HepG2 (cell line): ENCODE measurements at regions of chr1 and their contacts with region 1.

Region 1: DNA sequence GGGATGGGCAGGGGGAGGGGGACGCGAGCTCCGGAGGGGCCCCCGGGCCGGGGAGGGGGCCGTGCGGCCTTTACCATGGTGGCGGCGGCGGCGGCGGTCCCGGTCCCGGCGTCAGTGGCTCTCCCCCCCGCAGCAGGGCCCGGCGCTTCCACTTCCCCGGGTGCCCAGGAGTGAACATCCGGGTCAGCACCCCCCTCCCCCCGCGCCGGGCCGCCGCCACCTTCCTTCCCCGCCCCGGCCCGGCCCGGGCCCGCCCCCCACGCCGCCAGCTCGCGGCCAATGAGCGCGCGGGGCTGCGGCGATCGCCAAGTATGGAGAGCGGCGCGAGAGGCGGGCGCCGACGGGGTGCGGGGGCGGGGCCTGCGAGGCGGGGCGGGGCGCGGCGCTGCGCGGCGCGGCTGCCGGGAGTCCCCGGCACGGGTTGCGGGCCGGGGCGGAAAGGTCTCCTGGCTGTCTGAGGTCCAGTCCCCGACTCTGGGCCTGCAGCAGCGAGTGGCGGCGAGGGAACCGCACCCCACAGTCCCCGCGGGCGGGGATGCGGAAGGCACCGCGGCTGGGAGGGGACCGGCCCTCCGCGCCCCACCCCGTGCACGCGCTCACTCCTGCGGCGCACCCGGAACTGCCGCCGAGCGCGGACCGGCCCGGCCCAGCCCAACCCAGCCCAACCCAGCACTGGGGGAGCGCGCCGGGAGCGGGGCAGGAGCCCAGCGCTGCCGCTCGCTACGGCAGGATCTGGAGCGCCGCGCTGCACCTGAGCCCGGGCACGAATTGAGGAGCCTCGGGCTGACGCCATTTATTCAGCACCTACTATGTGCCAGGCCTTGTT is at the start of gene CAPZB:
- DNase-seq: peak; percentile 75
- ATAC-seq: peak; percentile 76
- H3K4me3 ChIP-seq: peak within 1 kb of the TSS; percentile 84 to 100 (median 99)
- H3K27ac ChIP-seq: peak within 1 kb of the TSS; percentile 93
- H3K4me1 ChIP-seq: peaks cover 61% of the 10 kb centered on the region
- H3K27me3 ChIP-seq: no peaks in the 10 kb centered on the region; a peak in 1 of 5 replicates
- CTCF ChIP-seq: no peak
- EP300 ChIP-seq: no peak
- POLR2A ChIP-seq: peak; percentile 80 to 84
- RAD21 ChIP-seq: peak; percentile 70
- total RNA-seq, gene CAPZB: 58.9 and 84.1 TPM in 2 replicates

Region 2: DNA sequence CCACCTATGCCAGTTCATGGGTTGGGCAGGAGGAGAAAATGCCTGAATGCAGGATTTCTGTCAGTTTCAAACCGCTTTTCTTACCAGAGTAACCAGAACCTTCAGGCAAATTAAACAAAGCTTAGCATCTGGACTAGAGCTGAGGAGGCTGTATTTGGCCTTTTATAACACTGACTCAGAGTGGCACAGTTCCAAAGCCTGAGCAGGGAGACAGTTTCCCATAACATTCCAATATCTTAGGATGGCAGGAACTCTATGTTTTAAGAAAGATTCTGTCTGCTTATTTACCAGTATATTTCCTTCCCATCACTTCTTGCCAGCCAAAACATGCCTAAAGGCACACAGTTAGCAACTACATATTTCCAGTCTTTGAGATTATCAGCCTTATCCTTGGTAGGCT is 322.3 kb before region 1 on chr1:
- CTCF ChIA-PET with region 1: no interaction called
- POLR2A ChIA-PET with region 1: no interaction called
- in situ Hi-C with region 1: no loop called
- intact Hi-C with region 1: no loop called
- DNase-seq: no peak
- ATAC-seq: no peak
- H3K4me3 ChIP-seq: no peak overlapping the region
- H3K27ac ChIP-seq: no peak overlapping the region
- H3K4me1 ChIP-seq: no peaks in the 10 kb centered on the region
- H3K27me3 ChIP-seq: no peaks in the 10 kb centered on the region
- CTCF ChIP-seq: no peak
- EP300 ChIP-seq: no peak
- POLR2A ChIP-seq: no peak
- RAD21 ChIP-seq: no peak

Region 3: DNA sequence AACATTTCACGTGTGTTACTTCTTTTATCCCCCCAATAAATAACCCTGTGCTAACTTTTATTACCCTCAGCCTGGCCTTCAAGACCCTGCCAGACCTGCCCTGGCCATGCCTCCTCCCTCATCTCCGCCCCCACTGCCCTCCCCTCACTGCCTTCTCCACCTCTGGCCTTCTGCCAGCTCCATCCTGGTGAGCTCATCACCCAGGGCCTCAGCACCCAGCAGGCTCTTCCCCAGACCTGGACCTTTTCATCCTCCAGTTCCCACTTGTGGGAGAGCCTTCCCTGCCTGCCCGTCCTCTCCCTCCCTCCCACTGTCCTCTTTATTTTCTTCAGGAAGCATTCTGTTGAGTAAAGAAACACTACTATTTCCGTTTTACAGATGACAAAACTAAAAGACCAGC is 101.5 kb before region 1 on chr1:
- CTCF ChIA-PET with region 1: no interaction called
- POLR2A ChIA-PET with region 1: no interaction called
- in situ Hi-C with region 1: no loop called
- intact Hi-C with region 1: loop called (anchors 5 kb)
- DNase-seq: no peak
- ATAC-seq: no peak
- H3K4me3 ChIP-seq: no peak overlapping the region
- H3K27ac ChIP-seq: no peak overlapping the region
- H3K4me1 ChIP-seq: peaks cover 52% of the 10 kb centered on the region
- H3K27me3 ChIP-seq: no peaks in the 10 kb centered on the region
- CTCF ChIP-seq: no peak
- EP300 ChIP-seq: no peak
- POLR2A ChIP-seq: no peak
- RAD21 ChIP-seq: no peak

Region 4: DNA sequence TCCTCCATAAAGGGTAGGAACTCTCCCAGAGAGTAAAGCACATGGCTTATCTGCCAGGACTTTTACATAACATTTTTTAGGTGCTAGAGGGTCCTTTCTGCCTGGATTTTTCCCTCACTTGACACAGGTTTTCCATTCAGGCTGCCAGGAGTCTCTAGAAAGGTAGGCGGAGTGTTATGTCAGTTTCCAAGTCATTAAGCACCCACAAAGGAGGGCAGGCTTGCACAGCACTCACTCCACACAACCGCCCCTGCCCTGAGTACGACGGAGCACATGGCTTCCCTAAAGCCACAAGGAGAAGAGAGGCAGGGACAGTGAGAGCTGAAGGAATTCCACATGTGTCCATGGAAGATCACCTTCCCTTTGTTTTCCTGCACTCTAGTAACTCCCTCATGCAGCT is 56.0 kb before region 1 on chr1:
- CTCF ChIA-PET with region 1: no interaction called
- POLR2A ChIA-PET with region 1: no interaction called
- in situ Hi-C with region 1: no loop called
- intact Hi-C with region 1: loop called (anchors 5 kb)
- DNase-seq: no peak
- ATAC-seq: no peak
- H3K4me3 ChIP-seq: no peak overlapping the region
- H3K27ac ChIP-seq: peak overlapping the region; percentile 65
- H3K4me1 ChIP-seq: peaks cover 89% of the 10 kb centered on the region
- H3K27me3 ChIP-seq: no peaks in the 10 kb centered on the region
- CTCF ChIP-seq: no peak
- EP300 ChIP-seq: no peak
- POLR2A ChIP-seq: no peak
- RAD21 ChIP-seq: no peak

Region 5: DNA sequence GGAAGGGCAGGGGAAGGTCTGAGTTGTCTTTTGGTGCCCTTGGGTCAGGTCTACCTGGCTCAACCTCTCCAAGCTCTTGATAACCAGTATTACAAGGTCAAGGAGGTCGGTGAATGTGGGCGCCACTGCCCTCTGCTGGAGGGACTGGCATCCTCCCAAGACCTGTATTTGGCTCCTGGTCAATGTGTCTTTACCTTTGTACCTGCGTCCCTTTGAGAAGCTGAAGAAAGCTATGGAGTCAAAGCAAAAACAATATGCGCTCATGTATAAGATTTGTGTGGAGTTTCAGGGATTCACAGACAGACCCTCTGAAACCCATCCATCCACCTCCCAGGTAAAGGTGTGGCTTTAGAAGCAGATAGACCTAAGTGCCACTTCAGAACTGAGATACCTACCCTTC is 96.7 kb after region 1 on chr1:
- CTCF ChIA-PET with region 1: no interaction called
- POLR2A ChIA-PET with region 1: no interaction called
- in situ Hi-C with region 1: no loop called
- intact Hi-C with region 1: no loop called
- DNase-seq: no peak
- ATAC-seq: no peak
- H3K4me3 ChIP-seq: no peak overlapping the region
- H3K27ac ChIP-seq: no peak overlapping the region
- H3K4me1 ChIP-seq: peaks cover 18% of the 10 kb centered on the region
- H3K27me3 ChIP-seq: no peaks in the 10 kb centered on the region; a peak in 1 of 5 replicates
- CTCF ChIP-seq: peak; percentile 61
- EP300 ChIP-seq: no peak
- POLR2A ChIP-seq: no peak
- RAD21 ChIP-seq: no peak

Region 6: DNA sequence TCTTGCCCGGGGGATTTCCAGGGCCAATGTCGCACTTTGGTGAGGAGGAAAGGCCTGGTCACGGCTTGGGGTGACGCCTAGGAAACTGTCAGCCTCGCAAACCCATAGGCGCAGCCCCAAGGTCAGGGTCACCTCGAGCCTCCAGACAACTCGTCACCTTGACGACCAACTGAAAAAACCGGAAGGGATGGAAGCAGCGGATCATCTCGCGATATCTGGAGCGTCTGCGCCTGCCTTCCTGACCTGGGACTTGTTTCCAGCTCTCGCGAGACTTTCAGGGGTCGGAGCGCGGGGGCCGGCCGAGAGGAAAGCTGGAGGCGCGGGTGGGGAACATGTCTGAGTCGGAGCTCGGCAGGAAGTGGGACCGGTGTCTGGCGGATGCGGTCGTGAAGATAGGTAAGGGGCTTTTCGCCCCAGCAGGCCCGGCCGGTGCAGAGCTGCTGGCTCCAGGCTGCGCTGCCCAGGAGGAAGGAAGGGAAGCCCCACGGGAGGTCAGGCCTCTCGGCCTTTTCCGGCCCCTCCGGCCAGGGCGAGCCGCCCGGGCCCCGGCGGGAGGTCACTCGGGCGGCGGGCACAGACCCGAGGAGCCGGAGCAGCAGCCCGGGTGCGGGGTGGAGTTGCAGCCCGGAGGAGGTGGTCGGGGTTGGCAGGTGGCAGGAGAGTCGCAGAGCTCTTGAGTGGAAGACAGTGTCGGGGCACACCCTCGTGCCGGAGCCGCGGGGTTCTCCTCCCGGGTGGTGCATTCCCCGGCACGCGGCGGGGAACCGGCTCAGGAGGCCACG is 111.3 kb after region 1 on chr1:
- CTCF ChIA-PET with region 1: no interaction called
- POLR2A ChIA-PET with region 1: interaction called, 13 read pairs
- in situ Hi-C with region 1: no loop called
- intact Hi-C with region 1: loop called (anchors 1 kb)
- DNase-seq: peak; percentile 99
- ATAC-seq: peak; percentile 94
- H3K4me3 ChIP-seq: peak overlapping the region; percentile 72 to 90 (median 78)
- H3K27ac ChIP-seq: peak overlapping the region; percentile 88
- H3K4me1 ChIP-seq: peaks cover 52% of the 10 kb centered on the region
- H3K27me3 ChIP-seq: no peaks in the 10 kb centered on the region; a peak in 1 of 5 replicates
- CTCF ChIP-seq: 0 out of 2 replicates have a peak, but pooled peaks have one; percentile 1
- EP300 ChIP-seq: 0 out of 4 replicates have a peak, but pooled peaks of 1 of the 2 experiments have one; percentile 5
- POLR2A ChIP-seq: peak; percentile 79 to 82
- RAD21 ChIP-seq: peak; percentile 39; the same call in 1 of the 2 replicates

Region 7: GRCh38 chr1:19651141-19651737 is 165.7 kb after region 1 on chr1:
- CTCF ChIA-PET with region 1: interaction called, 4 read pairs
- POLR2A ChIA-PET with region 1: no interaction called
- in situ Hi-C with region 1: loop called (anchors 5 kb)
- intact Hi-C with region 1: loop called (anchors 2 kb)
- DNase-seq: peak; percentile 24
- ATAC-seq: peak; percentile 90
- H3K4me3 ChIP-seq: peak overlapping the region in 1 of 3 experiments; percentile 39; a peak in 1 of 6 replicates
- H3K27ac ChIP-seq: no peak overlapping the region
- H3K4me1 ChIP-seq: peaks cover 29% of the 10 kb centered on the region
- H3K27me3 ChIP-seq: no peaks in the 10 kb centered on the region
- CTCF ChIP-seq: peak; percentile 96
- EP300 ChIP-seq: no peak
- POLR2A ChIP-seq: no peak
- RAD21 ChIP-seq: peak; percentile 95